BJ (cell line): ENCODE measurements at regions of chr5 and their contacts with region 1.

Region 1: DNA sequence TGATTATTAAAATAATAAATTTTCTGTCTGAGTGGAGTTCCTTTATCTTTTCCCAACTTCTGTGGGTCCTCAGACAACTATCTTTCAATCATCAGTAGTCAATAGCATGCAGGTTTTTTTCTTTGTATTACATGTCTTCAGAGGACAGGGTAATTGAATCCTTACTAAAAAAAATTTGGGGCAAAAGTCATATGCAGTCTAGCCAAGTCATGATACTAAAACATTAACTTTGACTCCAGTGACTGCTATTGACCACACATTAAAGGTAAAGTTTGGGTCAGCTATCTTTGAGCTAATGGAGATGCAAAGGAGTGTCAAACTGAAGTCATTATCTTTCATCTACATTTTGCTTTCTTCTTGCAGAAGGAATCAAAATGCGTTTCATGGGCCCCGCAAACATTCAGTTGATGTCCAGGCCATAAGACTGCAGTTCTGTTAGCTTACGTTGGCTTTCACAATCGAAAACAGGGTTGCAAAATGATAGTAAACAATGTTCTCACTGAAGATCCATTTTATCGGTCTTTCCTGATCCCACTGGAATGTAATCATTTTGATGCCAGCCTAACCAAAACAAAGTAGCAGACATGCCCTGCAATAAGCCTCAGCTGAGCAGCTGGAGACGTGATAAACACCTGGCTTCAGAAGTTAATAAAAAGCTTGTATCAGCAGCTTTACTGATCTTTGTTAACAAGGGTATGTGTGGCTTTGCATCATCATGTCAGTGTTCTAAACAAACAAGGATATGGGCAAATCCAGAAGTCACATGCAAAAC is 186.1 kb upstream of the PRLR start:
- DNase-seq: no peak
- H3K4me3 ChIP-seq: no peak overlapping the region
- H3K27me3 ChIP-seq: no peaks in the 10 kb centered on the region
- CTCF ChIP-seq: no peak

Region 2: DNA sequence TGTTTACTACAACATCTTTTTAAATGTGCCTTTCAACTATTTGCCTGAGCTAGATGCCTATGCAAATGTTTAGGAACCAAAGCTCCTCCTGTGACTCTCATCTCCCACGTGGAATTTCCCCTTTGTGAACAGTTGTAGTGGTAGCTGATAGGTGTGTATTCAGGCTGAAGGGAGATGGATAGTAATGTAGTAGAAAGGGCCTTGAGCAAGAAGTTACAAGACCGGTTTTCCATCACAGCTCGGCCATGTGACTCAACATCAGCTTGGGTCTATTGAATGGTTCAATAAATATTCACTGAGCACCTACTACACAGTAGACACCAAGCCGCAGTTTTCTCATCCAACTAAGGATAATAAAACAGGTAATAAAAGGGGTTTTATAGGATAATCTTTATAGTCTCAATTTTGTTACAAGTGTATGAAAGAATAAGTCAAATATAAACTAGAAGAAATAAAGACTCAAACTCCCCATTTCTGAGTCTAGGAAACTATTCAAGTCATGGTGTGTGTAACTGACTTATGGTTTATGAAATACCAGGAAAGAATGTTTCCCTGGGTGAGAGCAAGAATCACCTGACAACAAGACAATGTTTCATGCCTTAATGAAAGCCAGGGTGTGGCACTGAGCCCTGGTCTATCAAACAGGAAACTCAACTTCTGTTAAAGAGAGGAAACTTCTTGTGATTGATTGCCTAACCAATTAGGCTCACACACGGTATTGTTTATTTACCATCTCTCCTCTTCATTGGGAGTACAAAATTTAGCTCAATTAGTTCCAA is 14.2 kb after region 1 on chr5:
- CTCF ChIA-PET with region 1: interaction called, 7 read pairs
- POLR2A ChIA-PET with region 1: interaction called, 13 read pairs
- DNase-seq: no peak
- H3K4me3 ChIP-seq: no peak overlapping the region
- H3K27me3 ChIP-seq: no peaks in the 10 kb centered on the region; the same call in 1 of the 2 replicates
- CTCF ChIP-seq: no peak